Common myeloid progenitor, CD34-positive (primary cell): ENCODE measurements at regions of chr7 and their contacts with region 1.

Region 1: DNA sequence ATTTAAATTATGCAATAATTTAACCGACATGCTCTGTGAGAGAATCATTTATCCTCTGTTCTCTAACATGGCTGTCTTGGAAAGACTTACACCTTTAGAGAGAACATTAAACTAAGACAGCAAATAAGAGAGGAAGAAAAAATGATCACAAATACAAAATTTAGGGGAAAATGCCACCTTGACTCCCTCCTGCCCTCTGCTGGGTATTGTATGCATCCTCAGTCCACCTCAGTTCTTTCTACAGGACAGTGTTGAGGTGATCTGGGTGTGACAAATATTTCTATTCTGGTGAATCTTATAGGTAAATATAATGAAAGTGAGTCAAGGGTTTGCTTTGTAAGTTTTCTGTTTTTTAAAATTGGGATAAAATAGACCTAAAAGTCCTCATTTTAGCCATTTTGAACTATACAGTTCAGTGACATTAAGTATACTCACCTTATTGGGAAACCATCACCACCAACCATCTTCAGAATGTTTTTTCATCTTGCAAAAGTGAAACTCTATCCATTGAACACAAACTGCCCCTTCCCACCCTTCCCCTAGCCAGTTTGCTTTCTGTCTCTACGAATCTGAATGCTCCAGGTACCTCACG is 61.5 kb upstream of the ELMO1 start:
- DNase-seq: peak; percentile 36 to 70 (median 57)
- H3K4me3 ChIP-seq: no peak overlapping the region
- H3K27ac ChIP-seq: no peak overlapping the region
- H3K4me1 ChIP-seq: peaks cover 0 to 2% (median 0%) of the 10 kb centered on the region in 4 experiments
- H3K27me3 ChIP-seq: no peaks in the 10 kb centered on the region

Region 2: DNA sequence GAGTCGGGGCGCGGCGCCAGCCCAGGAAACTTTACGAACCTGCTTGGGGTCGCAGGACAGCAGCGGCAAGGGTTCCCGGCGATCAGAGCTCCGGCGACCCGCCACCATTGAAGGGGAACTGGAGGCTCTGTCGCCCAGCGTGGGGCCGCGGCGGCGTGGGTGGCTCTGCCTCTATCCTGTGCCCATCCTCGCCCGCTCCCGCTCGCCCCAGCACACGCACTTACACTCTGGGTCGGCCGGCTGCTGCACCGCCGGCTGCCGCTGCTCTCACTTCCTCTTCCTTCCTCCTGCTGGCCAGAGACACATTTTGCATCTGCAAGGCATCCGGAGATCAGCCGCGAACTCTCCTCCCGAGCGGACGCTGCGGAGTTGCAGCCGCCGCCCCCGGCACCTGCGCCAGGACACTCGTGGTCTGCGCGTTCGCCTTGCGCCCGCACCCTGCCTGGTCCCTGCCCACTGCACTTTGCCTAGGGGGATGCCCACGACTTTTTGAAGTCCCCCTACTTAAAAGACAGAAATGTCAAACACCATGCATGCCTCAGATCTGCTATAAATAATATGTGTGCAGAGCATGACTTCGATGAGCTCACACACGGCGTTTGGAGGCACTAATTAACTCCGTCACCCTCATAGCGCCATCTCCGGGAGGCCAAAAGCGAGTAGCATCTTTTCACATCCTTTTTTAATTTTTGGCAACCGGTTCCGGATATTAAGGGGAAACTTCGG is 61.3 kb before region 1 on chr7 and contains the start of gene ELMO1:
- CTCF ChIA-PET with region 1: interaction called, 10 read pairs
- POLR2A ChIA-PET with region 1: no interaction called
- DNase-seq: peak; percentile 92 to 97 (median 95)
- H3K4me3 ChIP-seq: peak within 1 kb of the TSS; percentile 83 to 91 (median 86)
- H3K27ac ChIP-seq: peak within 1 kb of the TSS; percentile 62 to 80
- H3K4me1 ChIP-seq: peaks cover 13 to 36% (median 27%) of the 10 kb centered on the region in 4 experiments
- H3K27me3 ChIP-seq: no peaks in the 10 kb centered on the region

Region 3: DNA sequence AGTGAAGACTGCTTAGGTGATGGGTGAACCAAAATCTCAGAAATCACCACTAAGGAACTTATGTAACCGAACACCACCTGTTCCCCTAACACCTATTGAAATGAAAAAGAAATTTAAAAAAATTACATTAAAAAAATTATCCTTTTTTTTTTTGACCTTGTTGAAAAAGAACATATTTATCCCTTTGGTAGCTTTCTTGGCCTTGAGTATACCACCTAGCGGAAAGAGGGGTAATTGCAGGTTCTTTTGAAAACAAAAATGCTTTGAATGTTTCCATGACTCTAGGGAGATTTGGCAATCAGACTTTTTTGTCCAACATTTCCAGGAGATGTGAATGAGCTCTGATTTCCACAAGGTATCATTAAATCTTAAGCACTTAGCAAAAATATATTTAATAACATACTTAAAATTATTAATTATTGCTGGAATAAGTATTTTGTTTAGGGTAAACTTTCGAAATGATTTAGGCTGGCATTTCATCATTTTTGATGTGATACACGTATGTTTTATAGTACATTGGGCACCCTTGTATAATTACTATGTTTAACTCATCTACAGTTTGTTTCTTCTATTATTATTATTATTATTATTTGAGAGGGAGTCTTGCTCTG is 14.5 kb before region 1 on chr7:
- CTCF ChIA-PET with region 1: interaction called, 94 read pairs
- POLR2A ChIA-PET with region 1: no interaction called
- DNase-seq: peak; percentile 43 to 68 (median 65)
- H3K4me3 ChIP-seq: no peak overlapping the region
- H3K27ac ChIP-seq: no peak overlapping the region
- H3K4me1 ChIP-seq: peaks cover 0 to 8% (median 7%) of the 10 kb centered on the region in 4 experiments
- H3K27me3 ChIP-seq: no peaks in the 10 kb centered on the region